Common myeloid progenitor, CD34-positive (primary cell): ENCODE measurements at regions of chr17 and their contacts with region 1.

Region 1: GRCh38 chr17:43576563-43577229 is 30.6 kb upstream of the ETV4 start:
- DNase-seq: peak; percentile 69 to 79 (median 74)
- H3K4me3 ChIP-seq: no peak overlapping the region
- H3K27ac ChIP-seq: no peak overlapping the region
- H3K4me1 ChIP-seq: peaks cover 0 to 17% (median 9%) of the 10 kb centered on the region in 4 experiments
- H3K27me3 ChIP-seq: peaks cover 0 to 10% (median 0%) of the 10 kb centered on the region in 5 experiments

Region 2: GRCh38 chr17:43521389-43521788 is 55.3 kb before region 1 on chr17:
- CTCF ChIA-PET with region 1: interaction called, 14 read pairs
- POLR2A ChIA-PET with region 1: no interaction called
- DNase-seq: no peak
- H3K4me3 ChIP-seq: no peak overlapping the region
- H3K27ac ChIP-seq: no peak overlapping the region
- H3K4me1 ChIP-seq: peaks cover 0 to 7% (median 2%) of the 10 kb centered on the region in 4 experiments
- H3K27me3 ChIP-seq: no peaks in the 10 kb centered on the region

Region 3: GRCh38 chr17:43641416-43641815 is 64.7 kb after region 1 on chr17:
- CTCF ChIA-PET with region 1: interaction called, 13 read pairs
- POLR2A ChIA-PET with region 1: interaction called, 4 read pairs
- DNase-seq: no peak
- H3K4me3 ChIP-seq: no peak overlapping the region
- H3K27ac ChIP-seq: no peak overlapping the region
- H3K4me1 ChIP-seq: peaks cover 0 to 16% (median 8%) of the 10 kb centered on the region in 4 experiments
- H3K27me3 ChIP-seq: peaks cover 0 to 19% (median 13%) of the 10 kb centered on the region in 5 experiments

Region 4: DNA sequence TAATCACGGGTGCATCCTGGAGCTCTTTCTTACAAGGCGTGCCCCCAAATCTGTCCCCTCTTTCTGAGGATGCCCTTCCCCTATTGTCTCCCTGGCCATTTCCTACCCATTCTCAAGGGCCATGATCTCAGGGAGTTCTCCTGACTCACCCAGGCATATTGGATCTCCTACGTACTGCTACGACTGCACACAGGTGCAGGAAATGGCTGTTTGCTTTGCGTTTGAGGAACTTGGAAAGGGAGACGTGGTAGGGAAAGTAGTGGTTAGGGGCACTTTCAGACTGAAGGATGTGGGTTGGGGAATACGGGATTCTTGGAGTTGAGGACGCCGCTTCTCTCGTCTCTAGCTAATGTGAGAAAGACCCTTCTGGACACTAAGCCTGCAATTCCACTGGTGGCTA is 103.8 kb after region 1 on chr17:
- CTCF ChIA-PET with region 1: interaction called, 16 read pairs
- POLR2A ChIA-PET with region 1: interaction called, 4 read pairs
- DNase-seq: peak; percentile 43 to 82 (median 77)
- H3K4me3 ChIP-seq: peak overlapping the region in 3 of 7 experiments; percentile 21 to 46 (median 37)
- H3K27ac ChIP-seq: no peak overlapping the region
- H3K4me1 ChIP-seq: peaks cover 0 to 34% (median 28%) of the 10 kb centered on the region in 4 experiments
- H3K27me3 ChIP-seq: no peaks in the 10 kb centered on the region

Region 5: DNA sequence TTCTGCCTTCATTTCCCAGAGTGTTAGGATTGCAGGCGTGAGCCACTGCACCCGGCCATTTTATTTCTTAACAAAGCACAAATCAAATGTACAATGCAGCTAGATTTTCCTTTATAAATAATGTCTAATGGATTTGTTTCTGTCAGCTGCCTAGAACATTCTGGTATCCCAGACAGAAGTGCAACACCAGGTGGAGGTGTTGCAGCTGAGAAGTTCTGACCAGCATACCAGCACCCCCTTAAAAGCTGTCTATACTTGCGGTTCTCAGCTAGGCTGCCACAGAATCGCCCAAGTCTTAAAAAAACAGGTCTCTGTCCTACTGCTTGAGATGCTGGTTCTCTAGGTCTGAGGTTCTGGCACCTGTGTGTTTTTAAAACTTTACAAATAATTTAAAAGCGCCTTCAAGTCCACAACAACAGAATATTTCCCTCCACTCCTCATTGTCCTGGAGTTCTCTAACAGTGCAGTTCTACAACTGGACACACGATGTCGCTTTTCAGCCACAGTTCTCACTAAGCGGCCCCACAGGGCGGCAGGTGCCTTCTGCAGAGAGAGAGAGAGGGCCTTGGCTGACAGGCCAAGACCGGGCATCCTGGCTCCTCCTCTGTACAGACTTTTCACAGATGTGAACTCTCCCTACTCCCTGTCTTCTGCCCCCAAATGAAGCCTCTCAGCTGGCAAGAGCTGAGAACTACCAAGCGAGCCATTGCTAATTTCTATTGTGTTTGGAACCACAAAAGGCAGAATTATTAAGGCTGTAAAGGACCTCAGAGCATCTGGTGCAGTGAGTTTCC is 117.6 kb after region 1 on chr17:
- CTCF ChIA-PET with region 1: interaction called, 89 read pairs
- POLR2A ChIA-PET with region 1: no interaction called
- DNase-seq: peak; percentile 82 to 89 (median 85)
- H3K4me3 ChIP-seq: no peak overlapping the region
- H3K27ac ChIP-seq: no peak overlapping the region
- H3K4me1 ChIP-seq: peaks cover 0 to 11% (median 0%) of the 10 kb centered on the region in 4 experiments
- H3K27me3 ChIP-seq: peaks cover 0 to 18% (median 14%) of the 10 kb centered on the region in 5 experiments

Region 6: DNA sequence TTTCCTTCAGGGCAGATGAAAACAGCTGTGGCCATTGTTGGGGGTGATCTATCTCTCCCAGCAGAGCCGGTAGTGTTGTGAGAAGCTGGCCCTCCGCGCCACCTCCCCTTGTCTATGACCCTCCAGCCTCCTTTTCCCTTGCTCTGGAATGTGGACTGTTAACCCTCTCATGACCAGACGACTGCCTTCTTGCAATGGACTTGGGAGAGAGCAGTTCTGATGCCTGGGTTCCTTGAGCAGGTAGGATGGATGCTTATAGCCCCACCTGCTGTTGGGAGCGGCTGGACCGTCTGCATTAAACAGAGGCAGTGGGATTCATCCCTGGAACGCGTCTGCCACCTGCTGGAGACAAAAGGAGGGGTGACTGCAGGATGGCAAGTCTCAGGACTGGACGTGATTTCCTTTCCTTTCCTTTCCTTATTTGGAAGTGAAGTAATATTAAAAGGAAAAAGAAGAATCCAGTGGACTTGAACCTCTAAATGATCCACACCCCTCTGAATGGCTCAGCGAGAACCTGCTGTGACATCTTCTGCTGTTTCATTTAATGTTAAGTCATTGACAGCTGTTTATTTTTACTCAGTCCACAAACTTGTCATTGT is 183.7 kb after region 1 on chr17:
- CTCF ChIA-PET with region 1: interaction called, 44 read pairs
- POLR2A ChIA-PET with region 1: no interaction called
- DNase-seq: peak; percentile 87 to 93 (median 90)
- H3K4me3 ChIP-seq: no peak overlapping the region
- H3K27ac ChIP-seq: no peak overlapping the region
- H3K4me1 ChIP-seq: peaks cover 0 to 7% (median 5%) of the 10 kb centered on the region in 4 experiments
- H3K27me3 ChIP-seq: peaks cover 0 to 35% (median 23%) of the 10 kb centered on the region in 5 experiments

Region 7: GRCh38 chr17:43766413-43767052 is 189.8 kb after region 1 on chr17:
- CTCF ChIA-PET with region 1: interaction called, 44 read pairs
- POLR2A ChIA-PET with region 1: no interaction called
- DNase-seq: peak; percentile 50 to 69 (median 52)
- H3K4me3 ChIP-seq: no peak overlapping the region
- H3K27ac ChIP-seq: no peak overlapping the region
- H3K4me1 ChIP-seq: peaks cover 13 to 50% (median 48%) of the 10 kb centered on the region in 4 experiments
- H3K27me3 ChIP-seq: no peaks in the 10 kb centered on the region